Left colon (tissue), 2 donors: ENCODE measurements at regions of chr11 and their contacts with region 1.

Region 1: DNA sequence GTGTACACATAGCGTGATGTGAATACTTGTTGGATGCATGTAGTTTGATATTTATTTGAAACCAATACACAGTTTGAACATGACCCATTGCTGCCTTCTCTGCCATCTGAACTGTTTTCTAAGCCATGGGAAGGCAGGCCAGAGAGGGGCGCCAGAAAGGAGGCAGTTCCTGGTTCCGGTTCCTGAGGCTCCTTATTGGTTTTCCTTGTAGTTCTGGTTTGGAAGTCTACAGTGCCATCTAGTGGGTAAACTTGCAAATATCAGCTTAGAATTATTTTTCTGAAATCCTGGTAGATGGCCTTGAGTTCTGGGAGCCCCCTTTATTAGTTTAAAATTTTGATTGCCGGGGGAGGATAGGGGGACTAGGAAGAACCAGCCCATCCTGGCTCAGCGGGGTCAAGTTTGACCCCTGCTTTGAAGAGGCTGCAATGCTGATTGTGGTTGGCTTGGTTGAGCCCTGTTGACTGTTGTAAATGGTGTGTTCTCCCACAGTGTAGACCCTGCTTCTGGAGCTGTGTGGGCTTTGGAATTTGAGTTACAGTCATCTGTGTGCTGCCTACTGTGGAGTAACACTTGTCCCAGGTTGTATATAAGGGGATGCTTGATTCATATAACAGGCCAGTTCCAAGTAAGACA is 48.4 kb downstream of the GRAMD1B start:
- DNase-seq: peak; percentile 39 to 49
- ATAC-seq: peak; percentile 91

Region 2: DNA sequence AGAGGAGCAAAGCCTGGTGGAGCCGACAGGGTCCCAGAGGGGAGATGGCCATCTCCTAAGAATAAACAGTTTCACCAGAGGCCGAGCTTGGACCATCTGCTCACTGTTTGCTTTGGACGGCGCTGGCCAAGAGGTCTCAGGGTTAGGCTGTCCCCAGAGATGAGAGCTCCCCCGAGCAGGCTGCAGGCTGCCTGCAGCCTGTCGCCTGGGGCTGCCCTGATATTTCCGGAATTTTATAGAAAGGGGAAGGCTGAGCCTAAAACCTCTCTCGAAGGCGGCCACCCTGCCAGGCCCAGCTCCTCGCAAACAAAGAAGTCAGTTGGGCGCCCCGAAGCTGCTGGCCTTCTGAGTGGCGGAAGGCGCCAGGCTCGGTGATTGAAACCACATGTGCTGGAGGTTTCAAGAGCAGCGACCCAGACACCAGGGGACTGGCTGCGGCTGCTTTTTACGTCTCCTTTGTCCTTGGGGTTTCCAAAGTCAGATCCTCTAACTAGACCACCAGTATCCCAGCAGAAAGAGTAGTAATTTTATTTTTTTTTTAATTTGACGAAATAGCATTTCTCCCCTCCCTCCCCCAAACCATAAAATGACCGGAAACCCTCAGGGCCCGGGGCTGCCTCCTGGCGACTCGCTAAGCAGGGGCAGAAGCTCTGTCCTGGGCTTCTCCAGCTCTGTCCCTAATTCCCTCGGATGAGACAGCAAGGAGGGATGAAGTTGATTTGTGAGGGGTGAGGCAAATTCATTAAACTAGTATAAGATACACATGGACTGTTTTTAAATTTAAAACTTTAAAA is 340.8 kb before region 1 on chr11:
- intact Hi-C with region 1: no loop called
- DNase-seq: peak; percentile 49 to 57
- ATAC-seq: no peak

Region 3: DNA sequence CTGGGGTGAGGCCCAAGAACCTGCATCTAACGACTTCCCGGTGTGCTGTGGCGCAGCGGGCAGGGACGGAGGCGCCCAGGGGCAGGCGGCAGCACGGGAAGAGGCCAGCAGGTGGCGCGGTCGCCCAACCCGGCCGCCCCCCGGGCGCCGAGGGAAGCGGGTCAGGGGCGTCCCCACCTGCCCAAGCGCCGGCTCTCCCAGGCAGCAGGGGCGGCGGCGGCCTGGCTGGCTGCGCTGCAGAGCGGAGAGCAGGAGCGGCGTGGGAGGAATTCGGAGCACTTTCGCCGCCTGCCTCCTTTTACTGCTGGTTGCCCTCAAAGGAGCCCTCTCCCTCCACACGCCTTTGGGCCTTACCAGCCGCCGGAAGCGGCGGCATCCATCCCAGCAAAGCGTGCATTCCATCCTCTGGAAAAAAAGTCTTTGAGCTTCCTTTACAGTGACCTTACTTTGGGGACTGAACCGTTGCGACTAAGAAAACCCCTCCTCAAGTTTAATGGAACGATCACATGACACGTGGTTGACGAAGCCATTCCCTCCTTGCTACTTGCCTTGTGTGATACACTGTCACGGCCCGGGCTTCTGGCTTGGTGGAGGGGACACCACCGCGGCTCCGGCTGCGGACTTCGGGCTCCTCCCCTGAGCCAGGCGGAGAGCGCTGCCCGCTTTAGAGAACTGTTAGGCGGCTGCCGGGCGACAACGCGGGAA is 176.6 kb before region 1 on chr11:
- intact Hi-C with region 1: loop called (anchors 2 to 5 kb)
- DNase-seq: peak in 1 of 2 donors; percentile 68
- ATAC-seq: peak; percentile 95

Region 4: DNA sequence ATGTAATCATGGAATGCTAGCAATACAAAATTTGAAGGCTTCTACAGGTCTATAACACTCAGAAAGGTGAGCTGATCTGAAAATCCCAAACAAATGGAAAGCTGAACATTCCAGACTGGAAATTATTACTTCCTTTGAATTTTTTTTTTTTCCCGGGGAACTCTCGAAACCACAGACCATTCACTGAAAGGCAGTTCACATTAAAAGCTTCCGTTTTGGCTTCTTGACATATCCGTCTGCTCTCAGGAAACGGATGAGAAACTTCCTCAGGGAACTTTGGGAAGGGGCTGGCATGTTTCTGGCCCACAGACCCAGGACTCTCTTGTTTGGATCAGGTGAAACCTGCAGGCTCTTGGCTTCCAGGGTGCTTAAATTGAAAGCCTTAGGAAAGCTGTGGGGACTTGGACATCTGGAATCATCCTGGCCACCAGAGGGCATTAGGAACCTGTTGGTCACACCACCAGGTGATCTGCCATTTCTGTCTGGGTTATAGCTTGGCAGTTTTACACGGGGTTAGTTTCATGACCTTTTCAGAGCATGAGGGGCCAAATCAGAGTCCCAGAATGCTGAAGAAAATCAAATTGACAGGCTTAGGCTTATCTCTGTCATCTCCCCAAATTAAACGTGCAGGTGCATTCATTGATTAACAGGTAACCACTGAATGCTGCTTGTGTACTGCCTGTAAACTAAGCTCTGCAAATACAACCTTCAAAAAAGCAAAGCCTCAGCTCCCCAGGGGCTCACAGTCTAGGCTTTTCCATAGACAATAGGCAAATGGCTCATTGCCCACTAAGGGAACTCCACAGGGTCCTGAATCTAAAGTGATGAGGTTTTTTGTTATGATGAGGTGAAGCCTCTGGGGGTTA is 71.1 kb before region 1 on chr11:
- intact Hi-C with region 1: loop called in 1 of 2 experiments (anchors 5 kb)
- DNase-seq: peak; percentile 62 to 80
- ATAC-seq: peak; percentile 89

Region 5: DNA sequence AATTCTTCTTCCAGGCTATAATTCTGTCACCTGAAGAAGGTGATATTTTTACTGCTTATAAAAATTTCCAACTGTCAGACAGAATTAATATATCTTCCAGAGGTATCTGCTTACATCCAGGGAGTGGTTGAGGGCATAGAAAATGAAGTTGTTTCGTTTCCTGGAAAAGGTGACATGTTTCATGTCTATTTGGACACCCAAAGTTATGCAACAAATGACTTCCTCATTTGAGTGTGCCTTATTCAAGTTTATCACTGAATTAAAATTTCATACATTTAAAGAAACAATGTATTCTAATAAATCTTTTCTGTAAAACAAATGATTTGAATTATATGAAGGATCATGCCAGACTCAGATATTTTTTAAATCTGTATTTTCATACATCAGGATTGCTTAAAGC is 56.9 kb before region 1 on chr11:
- intact Hi-C with region 1: no loop called
- DNase-seq: no peak
- ATAC-seq: no peak

Region 6: DNA sequence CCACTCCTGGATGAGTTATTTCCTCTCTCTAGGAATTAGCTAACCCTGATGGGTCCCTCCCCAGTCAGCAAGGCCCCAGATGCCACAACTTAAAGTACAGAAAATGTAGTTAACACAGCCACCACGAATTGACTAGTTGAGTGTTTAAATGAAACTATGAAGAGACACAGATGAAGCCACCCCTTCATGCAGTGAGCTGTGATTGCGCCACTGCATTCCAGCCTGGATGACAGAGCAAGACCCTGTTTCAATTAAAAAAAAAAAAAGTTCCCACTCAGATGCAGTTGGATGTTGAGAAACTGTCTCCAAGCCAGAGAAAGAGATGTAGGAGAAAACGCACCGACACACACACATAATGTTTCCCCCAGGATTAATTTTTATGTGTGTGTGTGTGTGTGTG is 122.7 kb after region 1 on chr11:
- intact Hi-C with region 1: no loop called
- DNase-seq: no peak
- ATAC-seq: no peak

Region 7: DNA sequence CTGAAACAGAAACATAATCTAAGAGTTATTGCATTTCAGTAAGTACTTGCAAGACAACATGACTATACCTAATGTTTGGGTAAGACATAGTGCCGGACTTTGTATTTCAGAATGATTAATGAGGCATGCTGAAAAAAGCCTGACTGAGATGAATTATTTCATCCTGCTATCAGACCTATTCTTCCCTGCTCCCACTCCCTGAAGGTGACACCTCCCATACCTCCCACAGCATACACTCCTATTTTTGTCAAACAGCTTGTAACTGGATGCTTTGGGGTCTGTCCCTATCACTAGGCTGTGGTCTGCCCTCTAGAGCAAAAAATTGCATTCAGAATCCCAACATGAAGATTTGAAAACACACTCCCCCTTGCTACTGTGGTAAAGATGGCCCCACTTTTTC is 186.8 kb after region 1 on chr11:
- intact Hi-C with region 1: no loop called
- DNase-seq: no peak
- ATAC-seq: no peak